ENCODE measurements at regions of chr4 and their contacts with region 1.

Region 1: DNA sequence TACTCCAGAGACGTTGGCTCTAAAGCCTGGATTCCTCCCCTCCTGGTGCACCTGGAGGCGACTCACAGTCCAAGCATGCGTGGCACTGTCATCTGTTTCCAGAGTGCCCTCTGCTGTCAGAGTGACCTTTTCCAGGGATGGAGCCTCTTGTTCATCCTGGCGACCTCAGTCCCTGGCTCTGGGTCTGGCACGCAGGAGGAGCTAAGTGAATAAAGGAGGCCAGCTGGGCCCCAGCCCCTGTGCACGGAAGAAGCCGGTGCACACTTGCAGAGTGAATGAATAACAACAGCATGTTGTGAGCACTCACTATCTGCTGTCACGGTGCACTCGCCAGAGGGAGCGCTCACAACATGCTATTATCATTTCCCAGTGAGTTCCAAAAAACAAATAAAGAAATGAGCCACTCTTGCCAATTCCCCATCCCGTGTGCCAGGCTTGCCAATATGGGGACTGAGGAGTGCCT is 27.8 kb upstream of the PSAPL1 start:
- DNase-seq: peak; percentile 36
- H3K4me3 ChIP-seq: no peak overlapping the region
- H3K27ac ChIP-seq: no peak overlapping the region
- H3K4me1 ChIP-seq: no peaks in the 10 kb centered on the region
- H3K27me3 ChIP-seq: peaks cover 2% of the 10 kb centered on the region
- CTCF ChIP-seq: peak; percentile 22 to 70 (median 58)
- POLR2A ChIP-seq: no peak

Region 2: DNA sequence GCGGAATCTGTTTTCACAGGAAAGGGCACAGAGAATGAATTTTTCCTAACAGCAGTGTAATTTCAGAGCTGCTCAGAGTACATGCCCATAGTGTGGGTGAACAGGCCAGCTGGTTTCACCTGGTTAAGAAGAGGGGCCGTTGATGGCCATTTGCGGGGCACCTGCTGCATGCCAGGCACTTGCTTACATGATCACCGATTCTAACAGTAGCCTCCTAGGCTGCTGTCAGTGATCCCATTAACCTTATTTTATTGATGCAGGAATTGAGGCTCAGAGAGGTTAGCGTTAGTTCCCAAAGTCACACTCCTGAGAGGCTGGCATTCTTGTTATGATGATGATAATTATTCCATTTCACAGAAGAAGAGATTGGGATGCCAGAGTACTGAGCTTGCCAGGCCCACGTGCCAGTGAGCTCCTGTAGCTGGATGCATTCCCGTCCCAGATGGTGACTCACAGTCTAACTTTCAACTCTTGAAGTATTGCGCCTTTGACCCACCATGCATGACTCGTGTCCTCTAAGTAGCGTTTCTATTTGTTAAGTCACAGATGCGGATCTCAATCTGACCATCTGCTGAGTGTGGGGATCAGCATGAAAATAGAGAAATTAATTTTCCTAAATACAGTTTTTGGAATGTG is 104.3 kb before region 1 on chr4:
- intact Hi-C with region 1: no loop called
- DNase-seq: no peak
- H3K4me3 ChIP-seq: no peak overlapping the region
- H3K27ac ChIP-seq: no peak overlapping the region
- H3K4me1 ChIP-seq: no peaks in the 10 kb centered on the region
- H3K27me3 ChIP-seq: no peaks in the 10 kb centered on the region
- CTCF ChIP-seq: no peak
- POLR2A ChIP-seq: no peak

Region 3: GRCh38 chr4:7539659-7540058 is 77.1 kb after region 1 on chr4:
- intact Hi-C with region 1: no loop called
- DNase-seq: no peak
- H3K4me3 ChIP-seq: no peak overlapping the region
- H3K27ac ChIP-seq: no peak overlapping the region
- H3K4me1 ChIP-seq: no peaks in the 10 kb centered on the region
- H3K27me3 ChIP-seq: no peaks in the 10 kb centered on the region
- CTCF ChIP-seq: no peak
- POLR2A ChIP-seq: no peak

Region 4: GRCh38 chr4:7719354-7720174 is 257.0 kb after region 1 on chr4:
- intact Hi-C with region 1: loop called (anchors 2 kb)
- DNase-seq: peak; percentile 35
- H3K4me3 ChIP-seq: no peak overlapping the region
- H3K27ac ChIP-seq: no peak overlapping the region
- H3K4me1 ChIP-seq: no peaks in the 10 kb centered on the region
- H3K27me3 ChIP-seq: no peaks in the 10 kb centered on the region
- CTCF ChIP-seq: peak; percentile 73 to 86 (median 74)
- POLR2A ChIP-seq: no peak

Measured in prostate gland (tissue), 2 donors.